Mammary epithelial cell (primary cell): ENCODE measurements at regions of chr6 and their contacts with region 1.

Region 1: DNA sequence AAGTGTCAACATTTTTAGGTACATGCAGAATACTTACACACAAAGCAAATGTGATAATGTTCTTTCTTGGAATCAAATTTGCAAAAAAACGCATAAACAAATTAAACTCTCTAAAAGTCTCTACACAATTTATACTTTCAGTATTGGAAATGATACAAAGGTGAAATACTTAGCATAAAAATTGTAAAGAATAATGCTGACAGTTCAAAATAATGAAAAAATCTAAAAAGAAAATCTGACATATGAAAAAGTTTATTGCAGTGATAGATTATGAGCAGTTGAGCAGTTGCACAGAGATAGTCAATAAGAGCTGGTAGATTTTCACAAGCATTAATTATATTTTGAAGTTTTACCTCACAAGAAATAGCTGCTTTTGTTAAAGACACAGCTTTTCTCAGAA is 1176.4 kb upstream of the EYS start:
- DNase-seq: no peak
- H3K4me3 ChIP-seq: no peak overlapping the region
- H3K27ac ChIP-seq: no peak overlapping the region
- H3K4me1 ChIP-seq: no peaks in the 10 kb centered on the region
- H3K27me3 ChIP-seq: no peaks in the 10 kb centered on the region
- CTCF ChIP-seq: no peak

Region 2: DNA sequence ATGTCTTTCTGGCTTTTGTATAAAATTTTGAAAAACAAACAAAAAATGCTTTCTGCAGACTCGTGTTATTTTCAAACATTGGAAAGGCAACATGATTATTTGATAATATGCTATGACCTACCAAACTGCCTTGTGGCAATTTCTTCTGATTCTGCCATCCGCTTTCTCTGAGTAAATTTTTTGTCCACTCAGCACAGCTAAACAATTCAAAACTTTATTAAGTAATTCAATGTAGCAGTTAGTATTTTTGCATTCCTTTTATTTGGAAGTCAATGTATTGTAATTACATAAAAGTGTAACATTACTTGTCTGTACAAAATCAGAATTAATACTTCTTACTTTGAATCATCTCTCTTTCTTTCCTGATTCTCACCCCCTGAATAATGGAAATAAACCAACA is 30.2 kb after region 1 on chr6:
- CTCF ChIA-PET with region 1: interaction called, 11 read pairs
- dilution Hi-C with region 1: no loop called
- in situ Hi-C with region 1: no loop called
- intact Hi-C with region 1: no loop called
- DNase-seq: no peak
- H3K4me3 ChIP-seq: no peak overlapping the region
- H3K27ac ChIP-seq: no peak overlapping the region
- H3K4me1 ChIP-seq: no peaks in the 10 kb centered on the region
- H3K27me3 ChIP-seq: no peaks in the 10 kb centered on the region
- CTCF ChIP-seq: no peak

Region 3: GRCh38 chr6:66986928-66987327 is 103.5 kb after region 1 on chr6:
- CTCF ChIA-PET with region 1: no interaction called
- dilution Hi-C with region 1: no loop called
- in situ Hi-C with region 1: no loop called
- intact Hi-C with region 1: no loop called
- DNase-seq: no peak
- H3K4me3 ChIP-seq: no peak overlapping the region
- H3K27ac ChIP-seq: no peak overlapping the region
- H3K4me1 ChIP-seq: no peaks in the 10 kb centered on the region
- H3K27me3 ChIP-seq: no peaks in the 10 kb centered on the region
- CTCF ChIP-seq: no peak